ENCODE measurements at regions of chr11 and their contacts with region 1.

Region 1: GRCh38 chr11:104830080-104830479 is 68.2 kb downstream of the CASP12 start:
- DNase-seq: no peak
- ATAC-seq: no peak
- H3K4me3 Mint-ChIP-seq: no peak overlapping the region
- H3K27ac Mint-ChIP-seq: no peak overlapping the region
- H3K4me1 Mint-ChIP-seq: peaks cover 12% of the 10 kb centered on the region
- H3K27me3 Mint-ChIP-seq: no peaks in the 10 kb centered on the region
- CTCF ChIP-seq: no peak

Region 2: GRCh38 chr11:104390651-104391050 is 439.4 kb before region 1 on chr11:
- CTCF ChIA-PET with region 1: no interaction called
- POLR2A ChIA-PET with region 1: no interaction called
- intact Hi-C with region 1: no loop called
- DNase-seq: no peak
- ATAC-seq: no peak
- H3K4me3 Mint-ChIP-seq: no peak overlapping the region
- H3K27ac Mint-ChIP-seq: no peak overlapping the region
- H3K4me1 Mint-ChIP-seq: no peaks in the 10 kb centered on the region
- H3K27me3 Mint-ChIP-seq: no peaks in the 10 kb centered on the region
- CTCF ChIP-seq: no peak

Region 3: DNA sequence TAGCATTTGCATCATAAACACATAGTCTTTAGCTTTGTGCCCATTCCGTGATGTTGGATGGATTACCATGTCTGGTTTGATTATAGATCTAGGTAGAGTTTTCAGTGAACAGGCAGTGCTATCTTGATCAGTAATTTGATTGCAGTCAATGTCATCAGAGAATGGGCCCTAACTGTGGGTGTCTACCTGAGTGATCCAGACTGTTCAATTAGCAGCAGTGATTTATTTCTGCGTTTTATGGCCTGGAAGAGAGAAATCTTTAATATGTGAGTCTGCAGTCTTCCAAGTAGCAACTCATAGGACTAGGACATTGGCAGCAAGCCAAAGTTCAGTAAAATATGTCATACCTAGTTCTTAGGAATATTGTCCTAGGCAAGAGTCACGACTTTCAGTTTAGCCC is 12.1 kb before region 1 on chr11:
- CTCF ChIA-PET with region 1: no interaction called
- POLR2A ChIA-PET with region 1: no interaction called
- intact Hi-C with region 1: loop called (anchors 2 kb)
- DNase-seq: no peak
- ATAC-seq: no peak
- H3K4me3 Mint-ChIP-seq: no peak overlapping the region
- H3K27ac Mint-ChIP-seq: no peak overlapping the region
- H3K4me1 Mint-ChIP-seq: peaks cover 3% of the 10 kb centered on the region
- H3K27me3 Mint-ChIP-seq: no peaks in the 10 kb centered on the region
- CTCF ChIP-seq: no peak

Region 4: DNA sequence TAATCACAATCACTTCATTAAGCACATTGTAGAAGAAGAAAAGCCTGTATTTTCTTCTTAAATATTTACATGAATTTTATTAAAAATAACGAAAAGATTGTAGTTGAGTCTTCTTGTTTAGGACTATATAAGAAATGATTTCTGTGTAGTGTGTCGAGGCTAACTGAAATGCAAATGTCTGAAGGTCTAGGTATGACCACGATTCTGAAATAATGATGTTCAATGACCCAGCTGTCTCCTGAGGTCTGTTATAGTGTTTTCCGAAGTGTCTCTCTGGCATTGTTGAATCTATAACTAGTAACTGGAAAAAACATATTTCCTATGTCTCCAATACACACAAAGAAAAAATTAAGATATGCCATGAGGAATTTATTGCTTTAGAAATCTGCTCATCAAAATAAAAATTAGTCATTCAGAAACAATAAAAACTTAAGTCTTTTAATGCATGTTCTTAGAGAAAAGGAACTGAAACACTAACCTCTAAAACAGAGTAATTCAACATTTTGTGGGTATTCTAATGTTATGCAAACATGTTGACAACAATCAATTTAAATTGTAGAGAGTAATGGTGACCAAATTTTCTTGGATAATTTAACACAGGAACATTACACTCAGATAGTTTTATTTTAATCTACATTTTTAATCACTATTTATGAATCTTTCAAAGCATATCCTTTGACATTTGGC is 13.2 kb after region 1 on chr11:
- CTCF ChIA-PET with region 1: no interaction called
- POLR2A ChIA-PET with region 1: interaction called, 3 read pairs
- intact Hi-C with region 1: loop called (anchors 2 kb)
- DNase-seq: no peak
- ATAC-seq: peak; percentile 20
- H3K4me3 Mint-ChIP-seq: no peak overlapping the region
- H3K27ac Mint-ChIP-seq: no peak overlapping the region
- H3K4me1 Mint-ChIP-seq: peaks cover 17% of the 10 kb centered on the region
- H3K27me3 Mint-ChIP-seq: no peaks in the 10 kb centered on the region
- CTCF ChIP-seq: no peak

Measured in activated B cell treated with CpG ODN at 0.5 μM for 24 hours (primary cell).